CD4-positive, alpha-beta T cell (primary cell): ENCODE measurements at regions of chr6 and their contacts with region 1.

Region 1: DNA sequence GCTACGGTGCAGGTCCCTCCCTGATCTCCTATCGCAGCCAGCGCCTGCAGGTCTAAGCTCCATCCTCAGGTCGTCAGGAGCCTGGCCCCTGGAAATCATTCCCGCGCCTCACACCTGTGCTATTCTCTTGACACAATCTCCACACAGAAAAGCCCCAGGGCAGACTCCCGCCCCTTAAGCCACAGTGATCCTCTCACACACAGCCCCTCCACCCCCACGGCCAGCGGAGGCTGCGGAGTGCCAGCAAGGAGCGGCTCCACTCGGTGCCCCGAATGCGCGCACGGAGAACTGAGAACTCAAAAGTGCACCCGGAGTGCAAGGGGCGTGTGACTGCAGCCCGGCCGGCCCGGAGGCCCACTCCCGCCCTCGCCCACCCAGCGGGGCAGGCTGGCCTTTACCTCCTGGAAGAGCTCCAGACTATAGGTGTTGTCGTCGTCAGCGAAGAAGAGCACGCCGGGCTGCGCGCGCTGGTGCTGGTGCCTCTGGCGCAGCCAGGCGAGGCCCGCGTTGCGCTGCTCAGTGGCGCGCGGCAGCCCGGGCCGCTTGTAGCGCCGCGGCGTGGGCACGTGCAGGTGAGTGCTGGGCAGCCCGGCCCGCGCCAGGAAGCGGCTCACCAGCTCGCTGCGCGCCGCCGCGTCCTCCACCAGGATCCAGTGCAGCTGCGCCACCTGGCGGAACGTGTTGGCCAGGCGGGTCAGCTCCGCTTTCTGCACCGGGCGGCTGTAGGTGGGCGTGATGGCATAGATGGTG is 1.2 kb downstream of the B3GAT2 start:
- DNase-seq: peak; percentile 71 to 90 (median 82)
- ATAC-seq: peak; percentile 92
- H3K4me3 ChIP-seq: peak overlapping the region; percentile 53
- H3K4me3 Mint-ChIP-seq: peak overlapping the region; percentile 81
- H3K27ac ChIP-seq: no peak overlapping the region
- H3K27ac Mint-ChIP-seq: no peak overlapping the region
- H3K4me1 ChIP-seq: peaks cover 26% of the 10 kb centered on the region
- H3K4me1 Mint-ChIP-seq: peaks cover 11% of the 10 kb centered on the region
- H3K27me3 ChIP-seq: peaks cover 28 to 61% of the 10 kb centered on the region in 2 experiments
- H3K27me3 Mint-ChIP-seq: peaks cover 77% of the 10 kb centered on the region
- CTCF ChIP-seq: peak; percentile 77

Region 2: GRCh38 chr6:70221025-70221714 is 734.4 kb before region 1 on chr6:
- CTCF ChIA-PET with region 1: interaction called, 7 read pairs
- POLR2A ChIA-PET with region 1: no interaction called
- intact Hi-C with region 1: loop called in 1 of 2 experiments (anchors 10 kb)
- DNase-seq: peak in 4 of 14 experiments; percentile 5 to 29 (median 20)
- ATAC-seq: no peak
- H3K4me3 ChIP-seq: no peak overlapping the region
- H3K4me3 Mint-ChIP-seq: no peak overlapping the region
- H3K27ac ChIP-seq: no peak overlapping the region
- H3K27ac Mint-ChIP-seq: no peak overlapping the region
- H3K4me1 ChIP-seq: no peaks in the 10 kb centered on the region
- H3K4me1 Mint-ChIP-seq: no peaks in the 10 kb centered on the region
- H3K27me3 ChIP-seq: no peaks in the 10 kb centered on the region
- H3K27me3 Mint-ChIP-seq: peaks cover 18% of the 10 kb centered on the region
- CTCF ChIP-seq: peak; percentile 68

Region 3: GRCh38 chr6:70310063-70310694 is 645.4 kb before region 1 on chr6:
- CTCF ChIA-PET with region 1: interaction called, 10 read pairs
- POLR2A ChIA-PET with region 1: no interaction called
- intact Hi-C with region 1: loop called in 1 of 2 experiments (anchors 5 kb)
- DNase-seq: peak in 3 of 14 experiments; percentile 39 to 44 (median 40)
- ATAC-seq: no peak
- H3K4me3 ChIP-seq: no peak overlapping the region
- H3K4me3 Mint-ChIP-seq: no peak overlapping the region
- H3K27ac ChIP-seq: no peak overlapping the region
- H3K27ac Mint-ChIP-seq: no peak overlapping the region
- H3K4me1 ChIP-seq: no peaks in the 10 kb centered on the region
- H3K4me1 Mint-ChIP-seq: no peaks in the 10 kb centered on the region
- H3K27me3 ChIP-seq: peaks cover 0 to 6% of the 10 kb centered on the region in 2 experiments
- H3K27me3 Mint-ChIP-seq: peaks cover 39% of the 10 kb centered on the region
- CTCF ChIP-seq: peak; percentile 60

Region 4: GRCh38 chr6:70520575-70520974 is 435.0 kb before region 1 on chr6:
- CTCF ChIA-PET with region 1: interaction called, 4 read pairs
- POLR2A ChIA-PET with region 1: interaction called, 4 read pairs
- intact Hi-C with region 1: loop called (anchors 10 kb)
- DNase-seq: peak in 4 of 14 experiments; percentile 14 to 51 (median 42)
- ATAC-seq: no peak
- H3K4me3 ChIP-seq: no peak overlapping the region
- H3K4me3 Mint-ChIP-seq: no peak overlapping the region
- H3K27ac ChIP-seq: no peak overlapping the region
- H3K27ac Mint-ChIP-seq: no peak overlapping the region
- H3K4me1 ChIP-seq: no peaks in the 10 kb centered on the region
- H3K4me1 Mint-ChIP-seq: peaks cover 7% of the 10 kb centered on the region
- H3K27me3 ChIP-seq: no peaks in the 10 kb centered on the region
- H3K27me3 Mint-ChIP-seq: no peaks in the 10 kb centered on the region
- CTCF ChIP-seq: peak; percentile 56

Region 5: GRCh38 chr6:70700922-70701876 is 254.4 kb before region 1 on chr6:
- CTCF ChIA-PET with region 1: interaction called, 5 read pairs
- POLR2A ChIA-PET with region 1: no interaction called
- intact Hi-C with region 1: loop called (anchors 2 to 5 kb)
- DNase-seq: no peak
- ATAC-seq: no peak
- H3K4me3 ChIP-seq: no peak overlapping the region
- H3K4me3 Mint-ChIP-seq: no peak overlapping the region
- H3K27ac ChIP-seq: no peak overlapping the region
- H3K27ac Mint-ChIP-seq: peak overlapping the region; percentile 50
- H3K4me1 ChIP-seq: peaks cover 15% of the 10 kb centered on the region
- H3K4me1 Mint-ChIP-seq: peaks cover 87% of the 10 kb centered on the region
- H3K27me3 ChIP-seq: no peaks in the 10 kb centered on the region
- H3K27me3 Mint-ChIP-seq: no peaks in the 10 kb centered on the region
- CTCF ChIP-seq: no peak

Region 6: DNA sequence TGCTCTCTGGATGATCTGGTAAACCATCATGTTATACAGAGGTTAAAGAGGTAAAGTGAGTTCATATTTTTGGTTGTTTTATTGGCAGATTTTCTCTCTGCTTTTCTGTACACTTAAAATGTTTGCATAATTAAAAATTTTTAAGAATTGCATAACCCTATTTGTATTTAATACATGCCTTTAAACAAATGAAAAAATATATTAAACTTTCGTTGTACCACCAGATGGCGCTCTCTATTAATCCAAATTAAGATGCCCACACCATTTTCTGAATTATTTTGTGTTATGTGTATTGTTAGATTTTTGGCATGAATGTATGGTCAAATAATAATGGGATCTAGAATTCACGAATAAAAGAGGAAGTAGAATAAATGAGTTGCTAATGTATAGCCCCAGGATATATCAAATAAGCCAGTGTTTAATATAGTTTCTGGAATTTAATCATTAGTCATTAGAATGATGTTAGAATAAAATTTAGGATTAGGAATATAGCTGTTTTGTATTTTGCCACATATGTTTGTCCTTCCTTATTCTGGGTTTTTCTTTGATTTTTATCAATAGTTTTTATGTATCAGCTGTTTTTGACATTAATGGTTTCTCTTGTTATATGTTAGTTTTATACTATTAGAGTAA is 249.0 kb before region 1 on chr6:
- CTCF ChIA-PET with region 1: interaction called, 10 read pairs
- POLR2A ChIA-PET with region 1: no interaction called
- intact Hi-C with region 1: loop called (anchors 2 to 5 kb)
- DNase-seq: peak in 4 of 14 experiments; percentile 30 to 74 (median 56)
- ATAC-seq: no peak
- H3K4me3 ChIP-seq: no peak overlapping the region
- H3K4me3 Mint-ChIP-seq: no peak overlapping the region
- H3K27ac ChIP-seq: no peak overlapping the region
- H3K27ac Mint-ChIP-seq: peak overlapping the region; percentile 8
- H3K4me1 ChIP-seq: no peaks in the 10 kb centered on the region
- H3K4me1 Mint-ChIP-seq: peaks cover 66% of the 10 kb centered on the region
- H3K27me3 ChIP-seq: no peaks in the 10 kb centered on the region
- H3K27me3 Mint-ChIP-seq: no peaks in the 10 kb centered on the region
- CTCF ChIP-seq: peak; percentile 82